ENCODE measurements at regions of chr9 and their contacts with region 1.

Region 1: DNA sequence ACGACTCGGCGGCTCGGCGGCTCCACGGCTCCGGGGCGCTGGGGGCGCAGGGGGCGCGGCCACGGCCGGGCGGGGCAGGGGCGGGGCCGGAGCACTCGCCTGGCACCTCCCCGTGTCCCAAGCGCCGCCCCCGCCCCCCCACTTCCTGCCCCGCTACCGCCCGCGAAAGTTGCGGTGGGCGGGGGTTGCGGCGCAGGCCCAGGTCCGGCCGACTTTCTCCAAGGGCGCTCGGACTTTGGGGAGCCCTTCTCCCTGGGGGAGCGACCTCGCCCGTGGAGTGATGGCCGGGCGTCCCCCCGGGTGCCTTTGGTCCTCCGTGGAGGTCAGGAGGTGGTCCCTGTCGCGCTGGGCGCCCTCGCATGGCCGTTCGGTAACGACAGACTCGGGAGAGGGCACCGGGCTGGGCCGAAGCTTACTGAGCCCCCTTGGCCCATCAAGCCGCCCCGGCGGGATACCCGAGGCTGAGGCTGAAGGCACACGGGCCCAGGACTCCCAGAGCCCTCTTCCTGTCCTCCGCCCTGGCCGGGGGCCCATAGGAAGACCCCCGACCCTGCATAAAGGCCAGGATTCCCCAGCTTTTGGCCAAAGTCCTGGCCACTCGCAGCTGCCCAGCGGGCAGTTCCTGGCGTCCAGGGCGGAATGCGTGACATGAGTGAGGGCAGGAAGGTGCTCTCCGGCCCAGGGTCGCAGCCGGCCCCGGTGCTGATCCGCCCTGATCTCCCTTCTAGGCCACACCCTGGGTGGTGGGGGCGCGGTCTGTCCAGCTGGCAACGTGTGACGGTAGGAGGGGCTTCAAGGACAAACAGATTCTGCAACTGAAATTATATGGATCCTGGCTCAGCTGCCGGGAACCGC is 883 bp upstream of the VAV2 start:
- DNase-seq: peak; percentile 89
- H3K4me3 ChIP-seq: peak overlapping the region; percentile 64 to 92 (median 91)
- H3K27ac ChIP-seq: peak overlapping the region; percentile 63
- H3K4me1 ChIP-seq: peaks cover 33% of the 10 kb centered on the region
- H3K27me3 ChIP-seq: no peaks in the 10 kb centered on the region
- CTCF ChIP-seq: peak; percentile 19 to 56

Region 2: DNA sequence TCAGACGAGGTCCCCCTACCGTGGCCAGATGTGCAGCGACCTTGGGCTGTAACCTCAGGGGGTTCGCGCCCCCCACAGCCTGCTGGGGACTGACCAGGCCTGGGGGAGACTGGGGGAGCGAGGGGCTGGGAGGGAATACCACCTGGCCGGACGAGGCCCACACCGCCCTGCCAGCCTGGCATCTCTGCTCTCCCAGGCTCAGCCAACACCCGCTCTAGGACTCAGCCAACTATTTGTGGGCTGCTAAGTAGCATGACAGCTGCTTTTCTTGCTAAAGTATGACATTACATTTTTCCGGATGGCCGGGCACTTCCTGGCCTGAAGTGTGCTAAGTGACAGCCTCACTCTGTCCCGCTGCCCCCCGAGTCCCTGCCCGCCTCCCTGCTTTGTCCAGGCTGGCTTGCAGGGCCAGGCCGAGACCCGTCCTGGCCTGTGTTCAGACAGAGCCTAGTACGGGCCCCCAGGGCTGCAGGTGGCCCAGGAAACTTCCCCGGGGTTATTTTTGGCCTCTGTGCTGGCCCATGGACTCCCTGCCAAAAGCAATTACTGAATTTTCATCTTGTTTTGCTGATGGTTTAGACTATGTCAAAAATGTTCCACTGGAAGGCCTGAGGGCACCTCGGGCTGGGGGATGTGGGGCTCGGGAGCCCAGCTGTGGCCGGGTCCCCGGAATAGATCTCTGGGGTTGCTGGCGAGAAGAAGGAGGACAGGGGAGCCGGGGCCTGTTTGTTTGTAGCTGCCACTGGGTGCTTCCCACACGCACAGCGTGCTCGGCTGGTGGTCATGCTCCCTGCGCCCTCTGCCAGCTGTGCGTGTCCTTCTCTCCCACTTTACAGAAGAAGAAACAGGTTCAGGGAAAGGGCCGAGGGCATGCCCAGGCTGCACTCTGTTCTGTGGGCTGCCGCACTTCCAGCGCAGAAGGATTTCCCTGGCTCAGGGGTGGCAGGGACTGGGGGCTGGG is 500.7 kb before region 1 on chr9:
- CTCF ChIA-PET with region 1: no interaction called
- dilution Hi-C with region 1: no loop called
- in situ Hi-C with region 1: no loop called
- intact Hi-C with region 1: loop called (anchors 5 kb)
- DNase-seq: peak; percentile 14
- H3K4me3 ChIP-seq: no peak overlapping the region
- H3K27ac ChIP-seq: no peak overlapping the region
- H3K4me1 ChIP-seq: peaks cover 13% of the 10 kb centered on the region
- H3K27me3 ChIP-seq: no peaks in the 10 kb centered on the region
- CTCF ChIP-seq: no peak

Region 3: GRCh38 chr9:133509179-133510079 is 483.6 kb before region 1 on chr9:
- CTCF ChIA-PET with region 1: no interaction called
- dilution Hi-C with region 1: no loop called
- in situ Hi-C with region 1: no loop called
- intact Hi-C with region 1: no loop called
- DNase-seq: no peak
- H3K4me3 ChIP-seq: peak overlapping the region in 1 of 3 experiments; percentile 12
- H3K27ac ChIP-seq: no peak overlapping the region
- H3K4me1 ChIP-seq: peaks cover 13% of the 10 kb centered on the region
- H3K27me3 ChIP-seq: no peaks in the 10 kb centered on the region
- CTCF ChIP-seq: no peak

Region 4: GRCh38 chr9:133787754-133788025 is 205.3 kb before region 1 on chr9:
- CTCF ChIA-PET with region 1: no interaction called
- dilution Hi-C with region 1: loop called (anchors 5 kb)
- in situ Hi-C with region 1: loop called (anchors 5 kb)
- intact Hi-C with region 1: loop called (anchors 1 kb)
- DNase-seq: peak; percentile 8
- H3K4me3 ChIP-seq: no peak overlapping the region
- H3K27ac ChIP-seq: no peak overlapping the region
- H3K4me1 ChIP-seq: peaks cover 3% of the 10 kb centered on the region
- H3K27me3 ChIP-seq: no peaks in the 10 kb centered on the region
- CTCF ChIP-seq: no peak

Region 5: DNA sequence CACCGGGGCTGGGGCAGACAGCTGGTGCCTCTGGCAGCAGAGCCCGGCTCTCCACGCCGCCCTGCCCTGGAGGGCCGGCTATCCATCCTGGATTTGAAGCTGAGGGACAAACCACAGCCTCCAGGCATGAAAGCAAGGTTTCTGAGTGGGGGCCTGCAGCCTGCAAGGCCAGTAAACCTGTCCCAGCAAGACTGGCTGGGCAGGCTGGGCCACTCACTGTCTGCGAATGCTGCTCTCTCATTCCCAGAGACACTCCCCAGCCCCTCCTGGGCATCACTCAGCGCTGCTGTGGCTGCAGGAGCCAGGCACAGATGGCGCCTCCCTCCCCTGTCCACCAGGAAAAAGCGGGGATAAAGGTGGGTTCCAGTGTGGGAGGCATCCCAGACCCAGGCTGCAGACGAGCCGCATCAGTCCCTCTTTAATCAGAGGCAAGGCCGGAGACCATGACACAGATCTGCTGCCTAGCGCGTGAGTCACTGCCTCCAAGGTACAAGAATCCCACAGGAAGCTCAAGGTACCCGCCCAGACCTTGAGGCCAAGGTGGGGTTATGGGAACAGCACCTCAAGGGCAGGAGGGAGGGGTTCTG is 118.9 kb before region 1 on chr9:
- CTCF ChIA-PET with region 1: no interaction called
- dilution Hi-C with region 1: no loop called
- in situ Hi-C with region 1: no loop called
- intact Hi-C with region 1: loop called (anchors 1 kb)
- DNase-seq: peak; percentile 99
- H3K4me3 ChIP-seq: peak overlapping the region in 1 of 3 experiments; percentile 7
- H3K27ac ChIP-seq: peak overlapping the region; percentile 98
- H3K4me1 ChIP-seq: peaks cover 53% of the 10 kb centered on the region
- H3K27me3 ChIP-seq: no peaks in the 10 kb centered on the region
- CTCF ChIP-seq: no peak

Region 6: GRCh38 chr9:133945314-133945975 is 47.6 kb before region 1 on chr9:
- CTCF ChIA-PET with region 1: interaction called, 6 read pairs
- dilution Hi-C with region 1: no loop called
- in situ Hi-C with region 1: no loop called
- intact Hi-C with region 1: loop called (anchors 1 kb)
- DNase-seq: no peak
- H3K4me3 ChIP-seq: no peak overlapping the region
- H3K27ac ChIP-seq: peak overlapping the region; percentile 0
- H3K4me1 ChIP-seq: peaks cover 25% of the 10 kb centered on the region
- H3K27me3 ChIP-seq: no peaks in the 10 kb centered on the region
- CTCF ChIP-seq: no peak

Region 7: DNA sequence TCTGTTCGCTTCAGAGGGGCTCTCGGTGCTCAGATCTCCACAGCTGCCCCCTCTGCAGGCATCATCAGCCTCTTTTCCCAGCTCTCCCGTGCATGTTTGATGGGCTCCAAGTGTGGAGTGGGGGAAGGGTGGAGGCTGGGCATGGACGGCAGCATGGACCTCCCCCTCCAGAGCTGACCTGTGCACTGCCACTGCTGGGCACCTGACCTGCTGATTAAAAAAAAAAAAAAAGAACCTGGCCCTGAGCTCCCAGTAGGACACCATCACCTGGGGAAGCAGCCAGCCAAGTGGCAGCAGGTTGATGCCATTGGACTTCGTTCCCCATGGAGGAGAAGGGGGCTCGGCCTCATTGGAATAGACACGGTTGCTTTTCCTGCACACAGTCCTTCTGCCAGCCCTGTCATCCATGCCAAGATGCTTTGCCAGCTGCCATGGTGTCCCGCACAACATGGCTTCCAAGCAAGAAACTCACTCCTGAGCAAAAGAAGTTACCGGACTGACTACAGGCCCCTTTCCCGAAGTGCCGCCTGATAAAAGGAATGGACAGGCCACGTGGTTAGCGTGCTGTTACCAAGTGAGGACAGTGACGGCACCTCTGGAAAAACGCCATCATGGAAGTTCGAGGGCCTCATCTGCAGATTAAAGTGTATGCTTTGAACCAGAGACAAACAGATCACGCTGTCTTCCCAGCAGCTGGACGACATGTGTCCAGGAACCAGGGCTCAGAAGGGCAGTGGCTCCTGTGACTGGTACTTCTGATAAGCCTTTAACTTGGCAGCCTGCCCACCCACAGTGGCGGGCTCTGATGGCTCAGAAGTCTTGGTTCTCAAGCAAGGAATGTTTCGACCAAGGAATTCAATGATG is 17.5 kb after region 1 on chr9:
- CTCF ChIA-PET with region 1: no interaction called
- dilution Hi-C with region 1: no loop called
- in situ Hi-C with region 1: no loop called
- intact Hi-C with region 1: no loop called
- DNase-seq: no peak
- H3K4me3 ChIP-seq: no peak overlapping the region
- H3K27ac ChIP-seq: no peak overlapping the region
- H3K4me1 ChIP-seq: no peaks in the 10 kb centered on the region
- H3K27me3 ChIP-seq: no peaks in the 10 kb centered on the region
- CTCF ChIP-seq: no peak

Region 8: DNA sequence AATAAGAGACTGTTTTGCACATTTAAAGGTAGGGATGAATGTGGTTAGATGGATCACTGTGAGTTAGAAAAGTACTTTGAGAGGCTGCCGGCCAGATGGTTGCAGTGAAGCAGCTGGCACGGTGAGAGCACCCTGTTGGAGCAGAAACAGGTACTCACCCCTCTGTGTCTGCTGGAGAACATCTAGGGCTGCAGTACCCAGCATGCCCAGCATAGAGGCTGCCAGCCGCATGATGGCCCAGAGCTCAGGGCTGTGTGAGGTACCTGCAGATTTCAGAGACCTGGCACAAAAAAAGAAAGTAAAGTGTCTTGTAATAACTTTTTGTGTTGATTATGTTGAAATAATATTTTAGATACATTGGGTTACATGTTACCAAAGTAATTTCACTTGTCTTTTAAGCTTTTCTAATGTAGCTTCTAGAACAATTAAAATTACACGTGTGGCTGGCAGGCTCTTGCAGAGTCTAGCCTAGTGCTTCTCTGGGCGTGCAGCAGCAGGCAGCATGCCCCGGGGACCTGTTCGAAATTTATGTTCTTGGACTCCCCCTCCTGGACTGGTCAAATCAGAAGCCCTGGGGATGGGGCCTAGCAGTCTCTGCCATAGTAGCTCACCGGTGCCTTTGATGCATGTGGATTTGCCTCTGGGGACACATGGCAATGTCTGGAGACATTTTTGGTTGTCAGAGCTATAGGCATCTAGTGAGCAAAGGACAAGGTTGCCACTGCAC is 153.9 kb after region 1 on chr9:
- CTCF ChIA-PET with region 1: no interaction called
- dilution Hi-C with region 1: no loop called
- in situ Hi-C with region 1: no loop called
- intact Hi-C with region 1: no loop called
- DNase-seq: peak; percentile 66
- H3K4me3 ChIP-seq: no peak overlapping the region
- H3K27ac ChIP-seq: no peak overlapping the region
- H3K4me1 ChIP-seq: peaks cover 13% of the 10 kb centered on the region
- H3K27me3 ChIP-seq: no peaks in the 10 kb centered on the region
- CTCF ChIP-seq: peak; percentile 19 to 47

Measured in mammary epithelial cell (primary cell).